ENCODE measurements at regions of chr19 and their contacts with region 1.

Region 1: GRCh38 chr19:47697863-47698609 is 15.2 kb upstream of the EHD2 start:
- DNase-seq: peak; percentile 89
- H3K4me3 Mint-ChIP-seq: no peak overlapping the region
- H3K27ac Mint-ChIP-seq: no peak overlapping the region
- H3K4me1 Mint-ChIP-seq: no peaks in the 10 kb centered on the region
- H3K27me3 Mint-ChIP-seq: no peaks in the 10 kb centered on the region
- CTCF ChIP-seq: peak; percentile 99

Region 2: DNA sequence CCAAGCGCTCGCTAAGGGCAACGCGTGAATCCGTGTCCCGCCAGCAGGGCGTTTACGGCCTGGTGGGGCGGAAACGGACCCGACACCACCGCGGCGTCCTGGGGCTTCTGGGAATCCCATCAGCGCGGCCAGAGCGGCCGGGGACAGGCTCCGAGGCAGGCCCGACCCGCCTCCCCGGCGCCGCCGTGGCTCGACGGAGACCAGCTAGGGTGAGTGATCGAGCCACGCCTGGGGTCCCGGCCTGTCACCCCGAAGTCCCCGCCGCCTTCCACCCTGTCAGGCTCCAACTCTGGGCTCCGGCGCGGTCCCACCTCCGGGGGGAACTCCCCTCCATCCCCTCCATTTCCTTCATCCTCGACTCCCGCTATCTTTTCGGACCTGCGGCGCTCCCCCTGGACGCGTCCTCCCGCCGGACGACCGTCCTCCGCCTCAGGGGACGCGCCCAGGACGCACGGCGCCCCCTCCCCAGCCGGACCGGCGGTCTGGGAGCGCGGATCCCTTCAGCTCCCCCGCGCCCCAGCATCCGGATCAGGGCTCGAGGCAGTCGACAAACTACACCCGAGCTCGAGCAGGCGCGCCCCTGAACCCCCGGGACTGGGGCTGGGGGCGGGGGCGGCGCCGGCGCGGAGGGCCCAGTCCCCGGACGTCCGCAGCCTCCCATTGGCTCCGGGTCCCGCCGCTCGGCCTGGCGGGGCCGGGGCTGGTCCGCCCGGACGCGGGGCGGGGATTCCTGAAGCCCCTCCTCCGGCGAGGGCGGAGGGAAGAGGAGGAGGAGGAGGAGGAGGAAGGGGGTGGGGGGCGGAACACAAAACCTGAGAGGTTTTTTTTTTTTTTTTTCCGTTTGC is 89.7 kb before region 1 on chr19:
- CTCF ChIA-PET with region 1: interaction called, 6 read pairs
- POLR2A ChIA-PET with region 1: interaction called, 3 read pairs
- intact Hi-C with region 1: loop called (anchors 2 kb)
- DNase-seq: peak; percentile 96
- H3K4me3 Mint-ChIP-seq: peak overlapping the region; percentile 84
- H3K27ac Mint-ChIP-seq: peak overlapping the region; percentile 75
- H3K4me1 Mint-ChIP-seq: peaks cover 15% of the 10 kb centered on the region
- H3K27me3 Mint-ChIP-seq: no peaks in the 10 kb centered on the region
- CTCF ChIP-seq: no peak

Region 3: GRCh38 chr19:47658431-47659348 is 39.3 kb before region 1 on chr19:
- CTCF ChIA-PET with region 1: no interaction called
- POLR2A ChIA-PET with region 1: no interaction called
- intact Hi-C with region 1: no loop called
- DNase-seq: no peak
- H3K4me3 Mint-ChIP-seq: no peak overlapping the region
- H3K27ac Mint-ChIP-seq: no peak overlapping the region
- H3K4me1 Mint-ChIP-seq: peaks cover 26% of the 10 kb centered on the region
- H3K27me3 Mint-ChIP-seq: no peaks in the 10 kb centered on the region
- CTCF ChIP-seq: no peak